Activated naive CD4-positive, alpha-beta T cell treated with anti-CD3 and anti-CD28 coated beads, Interleukin-2, amount 10 ng/mL, durations not matched to agents 7 days and 5 days (primary cell): ENCODE measurements at regions of chr11 and their contacts with region 1.

Region 1: DNA sequence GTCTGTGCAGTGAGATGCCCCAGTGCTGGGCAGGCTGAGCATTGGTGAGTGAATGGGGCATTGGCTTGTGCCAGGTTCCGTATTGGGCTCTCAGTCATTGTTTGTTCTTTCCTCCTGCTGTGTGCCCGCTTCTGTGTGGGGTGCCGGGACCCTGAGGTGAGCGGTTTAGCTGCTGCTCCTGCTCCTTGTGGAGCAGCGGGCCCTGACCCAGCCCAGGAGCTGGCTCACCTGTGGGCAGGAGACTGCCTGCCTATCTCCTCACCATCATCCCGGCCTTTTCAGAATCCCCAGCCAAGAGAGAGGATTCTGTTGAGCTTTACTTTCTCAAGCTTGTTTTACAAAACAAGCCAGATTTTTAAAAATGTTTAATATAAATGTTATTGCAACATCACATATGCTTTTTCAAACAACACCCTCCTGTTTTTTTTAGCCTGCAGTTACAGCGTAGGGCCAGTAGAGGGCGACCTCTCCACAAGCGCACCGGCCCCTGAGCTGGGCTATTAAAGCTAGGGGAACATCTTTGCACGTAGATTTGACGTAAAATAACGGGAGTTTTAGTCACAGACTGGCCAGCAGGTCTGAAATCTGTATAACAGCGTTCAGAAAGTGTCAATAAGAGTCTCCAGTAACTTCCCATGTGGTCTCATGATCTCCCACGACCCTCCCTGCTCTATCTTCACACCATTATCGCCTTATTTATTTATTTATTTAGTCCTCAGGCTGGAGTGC is 25.1 kb upstream of the RELT start:
- DNase-seq: peak; percentile 70
- H3K4me3 Mint-ChIP-seq: no peak overlapping the region
- H3K27ac Mint-ChIP-seq: no peak overlapping the region
- H3K4me1 Mint-ChIP-seq: peaks cover 17% of the 10 kb centered on the region
- H3K27me3 Mint-ChIP-seq: peaks cover 41% of the 10 kb centered on the region

Region 2: GRCh38 chr11:73257342-73258103 is 93.5 kb before region 1 on chr11:
- CTCF ChIA-PET with region 1: no interaction called
- DNase-seq: no peak
- H3K4me3 Mint-ChIP-seq: no peak overlapping the region
- H3K27ac Mint-ChIP-seq: no peak overlapping the region
- H3K4me1 Mint-ChIP-seq: no peaks in the 10 kb centered on the region
- H3K27me3 Mint-ChIP-seq: peaks cover 40% of the 10 kb centered on the region

Region 3: DNA sequence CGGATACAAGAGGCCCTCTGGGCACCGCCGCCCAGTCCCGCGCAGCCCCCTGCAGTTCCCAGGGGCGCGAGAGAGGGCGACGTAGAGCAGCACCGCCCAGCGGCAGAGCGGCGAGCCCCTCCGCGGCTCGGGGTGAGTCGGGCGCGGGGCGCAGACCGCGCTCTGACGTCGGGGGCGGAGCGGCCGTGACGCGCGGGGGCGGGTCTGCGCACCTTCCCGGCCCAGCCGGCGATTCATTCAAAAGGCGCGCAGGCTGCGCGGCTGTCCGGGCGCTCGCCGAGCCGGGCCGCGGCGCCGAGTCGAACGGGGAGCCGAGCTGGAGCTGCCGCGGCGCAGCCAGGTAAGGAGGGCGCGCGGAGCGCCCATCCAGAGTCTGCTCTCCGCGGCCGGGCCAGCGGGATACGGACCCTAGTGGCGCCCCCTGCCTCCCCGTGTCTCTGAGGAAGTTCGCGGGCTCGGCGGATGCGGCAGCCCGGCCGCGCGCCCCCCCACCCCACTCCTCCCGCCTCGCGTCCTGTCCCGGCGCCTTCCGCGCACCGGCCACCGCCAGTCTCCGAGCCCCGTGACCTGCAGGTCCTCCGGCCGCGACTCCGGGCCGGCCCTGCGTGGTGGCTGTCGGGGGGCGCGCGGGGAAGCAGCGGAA is 25.2 kb after region 1 on chr11 and contains the start of gene RELT:
- CTCF ChIA-PET with region 1: interaction called, 22 read pairs
- DNase-seq: peak; percentile 93
- H3K4me3 Mint-ChIP-seq: peak within 1 kb of the TSS; percentile 92
- H3K27ac Mint-ChIP-seq: peak within 1 kb of the TSS; percentile 91
- H3K4me1 Mint-ChIP-seq: peaks cover 46% of the 10 kb centered on the region
- H3K27me3 Mint-ChIP-seq: peaks cover 4% of the 10 kb centered on the region

Region 4: GRCh38 chr11:73384872-73385689 is 34.0 kb after region 1 on chr11:
- CTCF ChIA-PET with region 1: interaction called, 14 read pairs
- DNase-seq: peak; percentile 47
- H3K4me3 Mint-ChIP-seq: no peak overlapping the region
- H3K27ac Mint-ChIP-seq: peak overlapping the region; percentile 82
- H3K4me1 Mint-ChIP-seq: peaks cover 67% of the 10 kb centered on the region
- H3K27me3 Mint-ChIP-seq: no peaks in the 10 kb centered on the region

Region 5: DNA sequence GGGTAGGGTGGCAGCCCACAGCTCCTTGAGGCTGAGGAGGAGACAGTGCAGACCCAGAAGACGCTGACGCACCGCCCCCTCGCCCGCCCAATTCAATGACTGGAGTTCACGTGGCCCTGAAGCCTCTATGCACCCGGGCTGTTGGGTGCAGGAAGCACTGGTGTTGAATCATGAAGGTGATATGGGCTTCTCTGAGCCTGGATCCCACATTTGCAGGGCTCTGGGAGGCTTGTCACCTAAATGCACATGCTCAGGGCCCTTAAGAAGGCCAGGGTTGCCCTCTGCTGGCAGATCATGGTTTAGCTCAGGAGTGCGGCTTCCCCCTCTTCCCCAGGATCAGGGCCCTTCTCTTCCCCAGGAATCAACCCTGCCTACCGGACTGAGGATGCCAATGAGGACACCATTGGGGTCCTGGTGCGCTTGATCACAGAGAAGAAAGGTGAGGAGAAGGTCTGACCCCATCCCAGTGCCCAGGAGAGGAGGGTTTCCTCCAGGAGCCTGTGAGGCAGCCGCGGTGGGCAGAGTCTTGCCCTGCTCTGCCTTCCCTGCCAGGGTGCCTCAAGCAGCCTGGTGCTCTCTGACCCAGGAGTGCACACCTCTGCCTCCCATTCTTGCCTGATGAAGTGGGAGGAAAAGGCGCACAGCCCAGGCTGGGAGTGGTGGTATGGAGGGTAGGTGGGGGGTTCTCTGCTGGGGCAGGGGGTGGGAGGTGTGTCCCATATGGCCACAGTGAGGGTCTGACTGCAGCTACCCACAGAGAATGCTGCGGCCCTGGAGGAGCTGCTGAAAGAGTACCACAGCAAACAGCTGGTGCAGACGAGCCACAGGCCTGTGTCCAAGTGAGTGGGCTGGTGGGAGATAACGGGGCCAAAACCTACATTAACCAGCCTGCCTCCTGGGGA is 42.7 kb after region 1 on chr11:
- CTCF ChIA-PET with region 1: interaction called, 62 read pairs
- DNase-seq: peak; percentile 82
- H3K4me3 Mint-ChIP-seq: no peak overlapping the region
- H3K27ac Mint-ChIP-seq: peak overlapping the region; percentile 61
- H3K4me1 Mint-ChIP-seq: no peaks in the 10 kb centered on the region
- H3K27me3 Mint-ChIP-seq: no peaks in the 10 kb centered on the region

Region 6: GRCh38 chr11:73399159-73399590 is 48.1 kb after region 1 on chr11:
- CTCF ChIA-PET with region 1: interaction called, 62 read pairs
- DNase-seq: no peak
- H3K4me3 Mint-ChIP-seq: no peak overlapping the region
- H3K27ac Mint-ChIP-seq: no peak overlapping the region
- H3K4me1 Mint-ChIP-seq: no peaks in the 10 kb centered on the region
- H3K27me3 Mint-ChIP-seq: no peaks in the 10 kb centered on the region